CD4-positive, alpha-beta T cell (primary cell): ENCODE measurements at regions of chr17 and their contacts with region 1.

Region 1: DNA sequence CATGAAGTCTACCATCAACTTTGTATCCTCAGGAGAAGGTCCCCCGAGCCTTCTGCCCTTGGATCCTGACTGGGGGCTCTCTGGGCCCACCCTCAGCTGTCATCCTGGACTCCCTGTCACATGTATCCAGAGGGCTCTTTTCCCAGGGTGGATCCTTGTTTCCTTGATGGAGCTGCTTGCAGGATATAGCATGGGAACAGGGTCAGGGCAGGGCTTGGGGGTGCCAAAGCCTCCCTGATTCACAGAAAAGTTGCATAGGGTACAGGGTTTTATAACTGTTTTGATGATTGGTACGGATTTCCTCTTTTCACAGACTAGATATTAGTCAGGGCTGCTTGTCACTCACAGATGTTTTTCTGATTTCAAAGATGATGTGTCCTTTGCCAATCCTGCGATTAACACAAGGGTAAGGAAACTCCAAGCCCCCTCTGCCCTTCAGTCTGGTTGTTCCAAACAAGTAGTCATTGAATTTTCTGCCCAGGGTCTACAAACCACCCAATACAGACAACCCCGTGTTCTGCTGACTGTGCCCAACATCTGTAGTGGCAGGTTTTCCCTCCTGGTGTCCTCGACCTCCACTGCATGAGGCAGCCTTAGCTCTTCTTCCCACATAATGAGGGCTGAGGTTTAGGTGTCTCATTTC is 20.6 kb upstream of the SLC35G3 start:
- DNase-seq: peak in 13 of 14 experiments; percentile 13 to 72 (median 29)
- ATAC-seq: peak; percentile 52
- H3K4me3 ChIP-seq: peak overlapping the region; percentile 46
- H3K4me3 Mint-ChIP-seq: peak overlapping the region; percentile 18
- H3K27ac ChIP-seq: peak overlapping the region; percentile 75 to 89
- H3K27ac Mint-ChIP-seq: peak overlapping the region; percentile 91
- H3K4me1 ChIP-seq: peaks cover 75% of the 10 kb centered on the region
- H3K4me1 Mint-ChIP-seq: peaks cover 91% of the 10 kb centered on the region
- H3K27me3 ChIP-seq: no peaks in the 10 kb centered on the region
- H3K27me3 Mint-ChIP-seq: no peaks in the 10 kb centered on the region
- CTCF ChIP-seq: no peak

Region 2: DNA sequence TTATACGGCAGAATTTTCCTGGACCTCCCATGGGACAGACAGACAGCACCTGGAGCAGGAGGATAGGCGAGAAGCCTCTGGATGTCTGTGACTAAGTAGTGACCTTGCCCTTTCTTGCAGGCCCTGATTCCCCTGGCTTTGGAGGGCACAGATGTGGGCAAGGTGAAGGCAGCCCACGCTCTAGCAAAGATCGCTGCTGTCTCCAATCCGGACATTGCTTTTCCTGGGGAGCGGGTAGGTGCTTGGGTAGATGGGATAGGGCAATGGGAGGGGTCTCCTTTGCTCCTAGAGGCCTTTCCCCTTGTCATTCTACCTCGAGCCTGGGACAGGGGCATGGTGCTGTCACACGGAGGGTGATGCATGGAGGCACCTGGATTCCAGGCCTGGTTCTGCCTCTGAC is 37.9 kb before region 1 on chr17:
- CTCF ChIA-PET with region 1: no interaction called
- POLR2A ChIA-PET with region 1: interaction called, 11 read pairs
- intact Hi-C with region 1: loop called in 1 of 2 experiments (anchors 2 kb)
- DNase-seq: peak in 1 of 14 experiments; percentile 20
- ATAC-seq: no peak
- H3K4me3 ChIP-seq: no peak overlapping the region
- H3K4me3 Mint-ChIP-seq: peak overlapping the region; percentile 45
- H3K27ac ChIP-seq: no peak overlapping the region
- H3K27ac Mint-ChIP-seq: peak overlapping the region; percentile 92
- H3K4me1 ChIP-seq: peaks cover 61% of the 10 kb centered on the region
- H3K4me1 Mint-ChIP-seq: peaks cover 90% of the 10 kb centered on the region
- H3K27me3 ChIP-seq: no peaks in the 10 kb centered on the region
- H3K27me3 Mint-ChIP-seq: no peaks in the 10 kb centered on the region
- CTCF ChIP-seq: no peak

Region 3: DNA sequence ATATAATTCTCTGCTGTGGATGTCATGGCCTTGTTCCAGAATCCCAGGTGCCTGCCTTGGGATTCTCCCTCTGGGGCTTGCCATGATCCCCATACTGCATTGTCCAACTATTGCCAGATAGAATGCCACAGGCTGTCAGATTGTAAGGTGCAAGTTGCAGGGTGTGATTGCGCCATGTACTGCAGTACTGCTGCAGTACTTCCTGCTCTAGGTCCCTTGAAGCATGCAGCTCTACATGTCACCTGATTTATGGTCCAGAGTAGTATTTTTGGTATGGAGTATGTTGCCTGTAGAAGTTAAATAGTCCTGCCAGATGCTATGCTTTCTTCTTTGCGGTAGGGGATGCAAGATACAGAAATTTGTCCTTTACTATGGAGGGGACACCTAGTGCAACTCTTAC is 21.2 kb after region 1 on chr17:
- CTCF ChIA-PET with region 1: interaction called, 19 read pairs
- POLR2A ChIA-PET with region 1: interaction called, 440 read pairs
- intact Hi-C with region 1: no loop called
- DNase-seq: peak in 3 of 14 experiments; percentile 25 to 39 (median 35)
- ATAC-seq: peak; percentile 49
- H3K4me3 ChIP-seq: no peak overlapping the region
- H3K4me3 Mint-ChIP-seq: peak overlapping the region; percentile 26
- H3K27ac ChIP-seq: peak overlapping the region in 1 of 2 donors; percentile 11
- H3K27ac Mint-ChIP-seq: peak overlapping the region; percentile 100
- H3K4me1 ChIP-seq: peaks cover 74% of the 10 kb centered on the region
- H3K4me1 Mint-ChIP-seq: peaks cover 87% of the 10 kb centered on the region
- H3K27me3 ChIP-seq: no peaks in the 10 kb centered on the region
- H3K27me3 Mint-ChIP-seq: no peaks in the 10 kb centered on the region
- CTCF ChIP-seq: no peak

Region 4: DNA sequence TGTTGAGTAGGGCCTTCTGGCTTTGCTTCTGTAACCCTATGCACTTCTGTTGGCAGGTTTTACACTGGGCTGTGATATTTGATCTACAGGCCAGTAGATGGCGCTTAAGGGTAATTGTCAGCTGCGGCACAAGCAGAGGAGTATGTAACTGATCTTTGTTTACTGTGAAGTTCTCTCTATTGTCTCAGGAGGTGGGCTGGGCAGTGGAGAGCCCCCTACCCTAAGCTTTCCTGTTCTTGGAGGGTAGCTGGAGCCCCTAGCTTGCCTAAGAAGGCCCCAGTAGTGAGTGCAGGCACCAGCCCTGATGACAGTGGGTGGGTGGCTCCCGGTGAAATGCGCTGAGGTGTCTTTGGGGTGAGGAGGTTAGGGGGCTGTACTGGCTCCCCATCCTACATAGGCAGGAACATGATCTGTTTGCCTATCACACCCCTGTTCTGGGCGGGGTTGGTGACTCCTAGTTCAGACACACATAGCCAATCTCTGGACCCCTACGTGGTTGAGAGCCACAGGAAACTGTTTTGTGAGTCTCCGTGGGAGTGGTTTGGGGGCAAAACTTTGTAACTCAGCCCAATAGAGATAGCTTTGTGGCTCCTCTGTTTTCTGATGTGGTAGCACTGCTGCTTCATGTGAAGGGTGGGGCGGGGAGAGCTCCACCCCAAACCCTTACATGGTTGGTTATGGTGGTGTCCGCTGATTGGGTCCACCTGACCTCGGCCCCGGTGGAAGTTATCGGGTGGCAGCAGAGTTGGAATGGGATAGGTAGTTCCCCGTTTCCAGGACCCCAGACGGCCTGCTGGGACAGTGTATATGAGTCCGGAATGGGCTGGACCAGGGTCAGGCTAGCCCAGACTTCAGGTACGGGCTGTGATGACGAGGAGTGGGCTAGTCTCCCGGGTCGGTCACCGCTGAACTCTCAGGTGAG is 98.3 kb after region 1 on chr17:
- CTCF ChIA-PET with region 1: interaction called, 9 read pairs
- POLR2A ChIA-PET with region 1: interaction called, 29 read pairs
- intact Hi-C with region 1: loop called in 1 of 2 experiments (anchors 1 kb)
- DNase-seq: peak; percentile 67 to 97 (median 76)
- ATAC-seq: peak; percentile 90
- H3K4me3 ChIP-seq: peak overlapping the region; percentile 77
- H3K4me3 Mint-ChIP-seq: peak overlapping the region; percentile 89
- H3K27ac ChIP-seq: peak overlapping the region; percentile 69 to 70
- H3K27ac Mint-ChIP-seq: peak overlapping the region; percentile 96
- H3K4me1 ChIP-seq: peaks cover 30% of the 10 kb centered on the region
- H3K4me1 Mint-ChIP-seq: peaks cover 67% of the 10 kb centered on the region
- H3K27me3 ChIP-seq: no peaks in the 10 kb centered on the region
- H3K27me3 Mint-ChIP-seq: no peaks in the 10 kb centered on the region
- CTCF ChIP-seq: peak; percentile 78

Region 5: DNA sequence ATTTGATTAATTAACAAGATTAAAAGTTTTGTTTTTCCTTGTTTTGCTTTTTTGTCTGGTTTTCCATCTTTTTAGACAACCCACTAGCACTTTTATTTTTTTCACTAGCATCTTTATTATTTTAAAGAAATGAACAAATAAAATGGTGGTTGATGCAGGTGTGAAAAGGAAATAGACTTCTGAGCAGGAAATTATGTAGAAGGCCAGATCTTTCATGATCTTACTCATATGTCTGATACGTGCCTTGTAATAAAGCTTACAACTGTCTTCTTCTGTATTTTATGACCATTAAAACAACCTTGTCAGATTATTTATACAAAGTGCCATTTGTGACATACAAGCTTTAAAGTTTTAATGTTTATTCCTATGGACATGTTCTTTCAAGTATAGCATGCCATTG is 316.4 kb after region 1 on chr17:
- CTCF ChIA-PET with region 1: interaction called, 5 read pairs
- POLR2A ChIA-PET with region 1: interaction called, 67 read pairs
- intact Hi-C with region 1: no loop called
- DNase-seq: peak in 2 of 14 experiments; percentile 37 to 59
- ATAC-seq: peak; percentile 34
- H3K4me3 ChIP-seq: peak overlapping the region; percentile 2
- H3K4me3 Mint-ChIP-seq: peak overlapping the region; percentile 21
- H3K27ac ChIP-seq: peak overlapping the region in 1 of 2 donors; percentile 11
- H3K27ac Mint-ChIP-seq: peak overlapping the region; percentile 80
- H3K4me1 ChIP-seq: peaks cover 37% of the 10 kb centered on the region
- H3K4me1 Mint-ChIP-seq: peaks cover 64% of the 10 kb centered on the region
- H3K27me3 ChIP-seq: no peaks in the 10 kb centered on the region
- H3K27me3 Mint-ChIP-seq: no peaks in the 10 kb centered on the region
- CTCF ChIP-seq: no peak